Posterior vena cava (tissue), 2 donors: ENCODE measurements at regions of chr3 and their contacts with region 1.

Region 1: GRCh38 chr3:134473868-134474546 is 11.8 kb downstream of the ANAPC13 start:
- DNase-seq: peak; percentile 84

Region 2: GRCh38 chr3:134201201-134202130 is 272.5 kb before region 1 on chr3:
- intact Hi-C with region 1: loop called in 1 of 2 experiments (anchors 10 kb)
- DNase-seq: no peak

Region 3: DNA sequence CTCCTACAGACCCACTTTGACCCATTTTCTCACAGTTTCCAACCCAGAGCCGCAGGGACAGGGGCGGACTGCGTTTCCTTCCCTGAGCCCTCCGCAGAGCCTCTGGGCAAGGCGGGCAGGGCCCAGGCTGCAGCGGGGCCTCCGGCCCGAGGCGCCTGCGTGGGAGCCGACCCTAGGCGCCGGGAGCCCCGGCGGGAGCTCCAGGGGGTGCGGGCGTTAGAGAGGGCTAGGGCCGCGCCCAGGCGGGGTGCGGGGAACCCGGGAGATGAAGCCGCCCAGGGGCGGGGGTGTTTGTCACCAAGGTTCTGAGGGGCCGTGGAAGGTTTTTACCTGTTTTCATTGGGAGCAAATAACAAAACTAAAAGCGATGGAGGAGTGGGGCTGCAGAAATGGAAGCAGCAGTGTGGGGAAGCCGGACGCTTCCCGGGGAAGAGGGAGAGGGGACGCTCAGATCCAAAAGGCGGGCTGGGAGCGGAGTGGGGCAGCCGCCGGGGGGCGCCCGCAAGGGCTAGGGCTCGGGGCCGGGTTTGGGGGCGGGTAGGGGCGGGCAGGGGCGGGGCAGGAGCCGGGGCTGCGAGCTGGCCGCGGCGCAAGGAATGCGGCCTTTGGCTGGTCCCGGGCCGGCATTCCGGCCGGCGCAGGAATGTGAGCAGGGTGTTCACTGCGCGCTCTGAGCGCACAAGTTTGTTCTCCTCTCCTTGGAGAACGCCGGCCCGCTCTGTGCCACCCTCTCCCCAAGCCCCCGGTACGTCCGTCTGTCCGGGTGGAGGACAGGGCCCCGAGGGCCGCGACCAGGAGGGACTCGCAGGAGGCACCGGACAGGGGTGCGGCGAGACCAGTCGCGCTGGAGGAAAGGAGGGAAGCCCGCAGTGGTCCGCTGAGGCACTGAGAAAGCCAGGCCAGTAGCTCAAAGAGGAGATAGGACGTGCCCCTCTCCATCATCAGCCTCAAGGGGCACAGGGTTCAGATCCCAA is 160.8 kb before region 1 on chr3:
- intact Hi-C with region 1: loop called (anchors 2 to 5 kb)
- DNase-seq: peak; percentile 90